Posterior cingulate gyrus (tissue), 11 donors: ENCODE measurements at regions of chr19 and their contacts with region 1.

Region 1: GRCh38 chr19:40305403-40305802 is 20.3 kb upstream of the AKT2 start:
- DNase-seq: peak; percentile 54 to 97 (median 82)

Region 2: GRCh38 chr19:40231544-40232424 is 73.6 kb before region 1 on chr19:
- intact Hi-C with region 1: no loop called
- DNase-seq: peak in 2 of 10 donors; percentile 59 to 66

Region 3: GRCh38 chr19:40285353-40286234 is 19.8 kb before region 1 on chr19:
- intact Hi-C with region 1: no loop called
- DNase-seq: peak; percentile 98 to 100 (median 98)

Region 4: GRCh38 chr19:40425450-40426287 is 120.3 kb after region 1 on chr19 and contains the start of gene SERTAD1:
- intact Hi-C with region 1: loop called (anchors 10 kb)
- DNase-seq: peak; percentile 100

Region 5: GRCh38 chr19:40489882-40490230 is 184.5 kb after region 1 on chr19:
- intact Hi-C with region 1: no loop called
- DNase-seq: peak in 2 of 10 donors; percentile 70 to 84

Region 6: DNA sequence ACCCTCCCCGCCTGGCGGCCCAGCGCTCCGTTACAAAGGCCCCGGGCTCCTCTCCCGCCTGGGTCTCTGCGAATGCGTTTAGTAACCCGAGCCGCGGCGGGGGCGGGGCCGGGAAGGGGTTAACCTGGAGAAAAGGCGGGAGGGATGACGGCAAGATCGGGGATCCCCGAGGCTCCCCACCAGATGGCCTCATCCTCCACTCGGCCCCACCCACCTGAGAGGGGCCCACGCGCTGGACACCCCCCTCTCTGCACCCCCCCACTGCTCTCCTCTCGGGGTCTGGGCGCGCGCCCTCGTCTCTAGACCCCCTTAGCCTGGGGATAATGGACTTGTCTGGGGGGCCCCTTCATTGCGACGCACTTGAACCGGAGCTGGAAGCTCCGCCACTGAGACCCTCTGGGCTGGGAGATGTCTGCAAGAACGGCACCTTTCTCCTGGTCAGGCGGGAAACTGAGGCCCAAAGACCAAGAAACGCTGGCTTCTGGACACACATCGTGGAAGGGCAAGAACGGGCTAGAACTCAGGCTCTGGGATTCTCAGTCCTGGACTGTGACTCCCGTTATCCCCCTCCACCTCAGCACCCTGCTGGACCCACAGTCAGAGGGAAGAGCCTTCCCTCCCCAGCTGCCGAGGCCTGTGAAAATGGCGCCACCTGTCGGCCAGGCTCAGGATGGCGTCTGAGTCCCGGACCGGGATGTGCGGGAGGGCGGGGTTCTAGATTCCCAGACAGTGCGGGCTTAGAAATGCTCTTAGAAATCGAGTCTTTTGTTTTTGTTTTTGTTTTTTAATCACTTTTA is 292.9 kb after region 1 on chr19:
- intact Hi-C with region 1: loop called (anchors 5 kb)
- DNase-seq: peak; percentile 77 to 98 (median 90)

Region 7: GRCh38 chr19:40633207-40633606 is 327.8 kb after region 1 on chr19:
- intact Hi-C with region 1: loop called (anchors 10 kb)
- DNase-seq: peak in 2 of 10 donors; percentile 0 to 1